GM10248 (cell line): ENCODE measurements at regions of chrX and their contacts with region 1.

Region 1: DNA sequence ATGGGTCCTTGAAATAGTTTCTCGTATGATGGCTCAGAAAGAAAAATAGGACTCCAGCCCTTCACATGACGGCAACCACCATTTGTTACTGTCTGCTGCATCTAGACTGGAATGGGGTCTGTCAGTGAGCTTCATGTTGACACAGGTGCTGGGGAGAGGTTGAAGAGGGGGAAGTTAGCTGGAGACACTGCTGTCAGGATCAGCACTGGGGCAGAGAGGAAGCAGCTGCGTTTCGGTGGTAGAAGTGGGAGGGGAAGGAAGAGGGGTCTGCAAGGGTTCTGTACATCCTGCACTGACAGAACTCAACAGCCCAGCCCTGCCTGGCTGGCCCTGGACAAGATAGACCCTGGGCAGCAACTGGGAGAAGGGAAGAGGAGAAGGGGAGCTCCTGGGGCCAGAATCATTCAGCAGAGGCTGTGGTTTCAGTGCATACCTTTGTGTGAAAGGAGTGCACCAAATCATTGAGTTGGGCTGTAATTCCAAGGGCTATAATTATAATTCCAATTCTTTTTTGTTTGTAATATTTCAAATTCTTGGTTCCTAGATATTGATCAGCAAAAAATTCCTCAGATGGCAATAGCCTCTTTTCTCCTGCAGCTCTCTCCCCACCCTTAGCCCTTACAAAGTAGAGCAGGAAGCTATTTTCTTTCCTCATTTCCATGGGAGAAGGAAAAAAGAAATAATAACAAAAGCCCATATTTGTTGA is 119.4 kb upstream of the C1GALT1C1 start:
- DNase-seq: no peak
- CTCF ChIP-seq: no peak

Region 2: DNA sequence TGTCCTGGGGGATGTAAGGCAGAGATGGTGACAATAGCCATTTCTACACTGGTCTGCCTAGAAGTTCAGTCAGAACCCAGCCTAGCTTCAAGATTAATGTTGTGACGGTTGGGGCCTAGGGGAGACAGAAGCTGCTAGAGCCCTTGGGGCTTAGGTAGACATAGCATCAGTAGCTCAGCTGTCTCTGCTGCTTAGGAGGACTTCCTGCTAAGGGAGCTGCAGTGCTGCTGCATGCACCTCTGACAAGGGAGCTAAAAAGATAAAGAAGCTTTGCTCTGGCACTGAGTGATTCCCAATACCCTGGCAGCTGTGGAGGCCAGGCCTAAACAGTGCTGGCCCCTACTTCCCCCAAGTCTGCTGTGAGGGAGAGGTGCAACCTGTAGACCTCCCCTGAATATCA is 10.4 kb after region 1 on chrX:
- CTCF ChIA-PET with region 1: no interaction called
- POLR2A ChIA-PET with region 1: no interaction called
- DNase-seq: no peak
- CTCF ChIP-seq: no peak

Region 3: DNA sequence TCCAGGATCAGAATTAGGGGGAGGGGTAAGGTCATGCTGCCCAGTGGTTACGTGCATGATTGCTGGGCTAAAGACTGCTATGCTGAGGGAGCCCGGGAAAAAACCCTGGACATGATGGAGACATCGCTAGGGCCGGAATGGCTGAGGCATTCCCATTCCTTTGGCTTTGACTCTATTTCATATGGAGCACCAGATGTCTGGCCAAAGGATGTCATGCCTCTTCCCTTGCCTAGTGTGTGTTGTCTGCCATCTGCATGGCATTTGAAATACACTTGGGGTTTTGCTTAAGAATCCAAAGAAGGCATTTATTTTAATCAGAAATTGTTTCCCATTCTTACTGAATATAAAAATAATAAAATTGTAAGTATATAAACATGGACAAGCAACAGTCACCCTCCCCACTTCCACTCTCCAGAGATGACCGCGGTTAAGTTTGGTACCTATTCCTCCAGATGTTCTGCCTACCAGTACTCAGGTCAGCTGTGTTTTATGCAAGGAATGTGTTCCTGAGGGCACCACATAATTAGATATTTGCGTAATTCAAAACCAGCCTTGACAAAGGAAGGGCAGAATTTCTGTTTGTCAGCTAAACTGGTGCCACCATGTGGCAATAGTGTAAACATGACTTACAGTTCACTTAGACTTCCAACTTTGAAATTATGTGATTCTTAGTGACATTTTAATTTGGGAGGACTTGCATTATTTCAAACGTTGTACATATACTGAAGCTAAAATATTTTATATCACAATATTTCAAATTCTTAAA is 20.5 kb after region 1 on chrX:
- CTCF ChIA-PET with region 1: interaction called, 24 read pairs
- POLR2A ChIA-PET with region 1: no interaction called
- DNase-seq: peak; percentile 19
- CTCF ChIP-seq: peak; percentile 37